ENCODE measurements at regions of chr10 and their contacts with region 1.

Region 1: DNA sequence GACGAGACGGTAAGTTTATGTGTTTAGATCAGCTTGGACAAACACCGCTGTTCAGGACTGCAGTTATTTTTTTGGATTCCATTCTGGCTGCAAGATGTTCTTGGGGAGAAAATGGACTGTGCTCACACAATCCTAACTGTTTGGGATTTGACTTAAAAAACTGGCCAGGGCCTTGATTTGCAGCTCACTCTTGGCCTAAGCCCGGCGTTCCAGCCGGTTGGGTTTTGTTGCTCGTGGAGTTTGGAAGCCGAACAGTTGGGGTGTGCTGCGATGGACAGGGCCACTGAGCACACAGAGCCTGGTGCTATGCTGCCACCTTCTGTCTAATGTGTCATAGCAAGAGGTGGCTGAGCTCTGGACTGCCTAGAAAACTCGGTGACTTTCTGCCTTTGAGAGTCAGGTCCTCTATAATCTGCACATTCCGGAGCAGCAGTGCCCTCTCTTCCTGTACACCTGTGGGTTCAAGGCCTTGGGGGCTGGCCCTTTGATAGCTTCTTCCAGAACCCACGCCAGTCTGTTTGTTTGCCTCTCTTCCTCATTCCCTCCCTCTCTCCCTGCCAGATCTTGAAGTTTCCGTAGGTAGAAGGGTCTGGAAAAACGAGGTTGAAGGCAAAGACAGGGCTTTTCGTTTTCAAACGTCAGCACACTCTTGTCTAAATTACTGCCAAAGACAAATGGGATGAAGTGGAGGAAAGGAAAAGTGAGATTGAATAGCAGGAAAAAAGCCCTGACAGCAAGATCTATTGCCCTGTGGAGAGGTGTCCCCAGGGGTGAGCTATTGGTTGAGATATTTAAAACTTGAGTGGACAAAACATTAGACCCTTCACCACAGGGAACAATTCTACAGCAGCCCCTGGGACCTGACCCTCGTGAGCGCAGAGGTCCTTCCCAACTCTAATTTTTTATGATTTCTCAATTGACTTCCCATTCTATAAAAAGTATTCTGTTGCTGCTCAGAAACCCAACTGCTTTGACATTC is 167.5 kb upstream of the HABP2 start:
- DNase-seq: peak; percentile 83 to 91 (median 87)
- ATAC-seq: peak; percentile 94 to 99 (median 98)
- H3K4me3 ChIP-seq: peak overlapping the region in 2 of 12 donors; percentile 1 to 16
- H3K27ac ChIP-seq: peak overlapping the region in 7 of 12 donors; percentile 2 to 66 (median 41)
- H3K4me1 ChIP-seq: peaks cover 0 to 33% (median 5%) of the 10 kb centered on the region in 12 donors
- H3K27me3 ChIP-seq: peaks cover 0 to 7% (median 0%) of the 10 kb centered on the region in 9 donors
- CTCF ChIP-seq: peak; percentile 81 to 92 (median 84)
- POLR2A ChIP-seq: no peak

Region 2: DNA sequence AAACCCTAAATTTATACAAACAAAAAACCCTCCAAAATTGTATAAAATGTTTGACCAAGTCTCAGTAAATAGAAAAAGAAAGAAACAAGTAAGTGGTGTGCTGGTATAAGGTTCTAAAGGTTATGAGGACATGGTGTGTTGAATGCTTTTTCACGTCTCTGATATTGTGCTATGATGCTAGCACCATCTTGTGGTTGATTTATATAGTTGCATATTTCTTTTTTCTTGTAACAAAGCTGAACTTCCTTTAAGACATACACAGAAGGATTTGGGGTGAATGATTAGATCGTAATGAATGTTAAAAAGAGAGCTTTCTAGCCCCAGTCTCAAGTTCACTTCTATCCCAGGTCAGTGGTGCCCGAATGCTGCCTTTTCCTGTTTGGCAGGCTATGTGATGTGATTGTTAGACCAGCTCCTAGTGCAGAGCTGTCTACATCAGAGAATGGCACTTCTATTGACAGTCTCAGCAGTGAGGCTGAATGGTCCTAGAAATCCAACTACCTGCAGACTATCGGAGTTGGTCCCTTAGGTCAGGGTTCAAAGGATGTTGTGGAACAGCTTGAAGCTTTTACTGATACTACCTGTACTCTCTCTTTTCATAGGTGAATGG is 913.3 kb before region 1 on chr10:
- intact Hi-C with region 1: loop called (anchors 2 to 10 kb)
- DNase-seq: no peak
- ATAC-seq: peak; percentile 17 to 63 (median 56)
- H3K4me3 ChIP-seq: no peak overlapping the region
- H3K27ac ChIP-seq: no peak overlapping the region
- H3K4me1 ChIP-seq: peaks cover 0 to 10% (median 0%) of the 10 kb centered on the region in 12 donors
- H3K27me3 ChIP-seq: no peaks in the 10 kb centered on the region
- CTCF ChIP-seq: peak; percentile 60 to 81 (median 70)
- POLR2A ChIP-seq: no peak

Region 3: DNA sequence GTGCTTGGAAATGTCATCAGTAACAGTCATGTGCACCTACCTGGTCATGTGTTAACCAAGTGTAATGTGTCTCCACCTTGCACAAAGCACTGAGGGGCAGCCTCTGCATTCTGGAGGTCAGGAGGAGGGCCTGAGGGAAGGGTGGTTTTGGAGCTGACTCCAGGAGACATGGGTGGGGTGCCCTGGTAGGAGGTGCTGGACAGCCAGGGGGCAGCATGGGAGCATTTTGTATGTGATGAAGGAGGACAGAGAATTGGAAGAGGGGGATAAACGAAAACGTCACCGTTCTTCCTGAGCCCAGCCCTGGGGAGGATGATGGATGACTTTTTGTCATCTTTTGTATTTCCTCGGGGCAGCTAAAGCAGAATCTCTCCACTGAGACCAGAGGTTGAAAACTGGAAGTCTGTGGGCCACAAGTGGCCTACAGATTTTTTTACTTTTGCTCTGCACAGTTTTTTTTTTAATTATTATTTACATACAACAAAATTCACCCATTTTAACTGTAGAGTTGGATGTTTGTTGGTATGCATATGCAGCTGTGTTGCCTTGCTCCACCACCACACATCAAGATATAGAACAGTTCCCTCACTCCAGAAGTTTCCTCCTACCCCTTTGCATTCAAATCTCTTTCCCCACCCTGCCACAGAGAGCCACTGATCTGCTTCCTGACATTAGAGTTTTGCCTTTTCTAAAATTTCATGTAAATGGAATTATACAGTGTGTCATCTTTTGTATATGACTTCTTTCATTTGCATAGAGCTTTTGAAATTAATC is 695.8 kb before region 1 on chr10:
- intact Hi-C with region 1: loop called in 2 of 10 experiments (anchors 5 to 10 kb)
- DNase-seq: peak in 3 of 5 donors; percentile 21 to 35 (median 27)
- ATAC-seq: peak in 1 of 4 donors; percentile 41
- H3K4me3 ChIP-seq: no peak overlapping the region
- H3K27ac ChIP-seq: no peak overlapping the region
- H3K4me1 ChIP-seq: no peaks in the 10 kb centered on the region
- H3K27me3 ChIP-seq: no peaks in the 10 kb centered on the region
- CTCF ChIP-seq: peak in 11 of 12 donors; percentile 15 to 52 (median 36)
- POLR2A ChIP-seq: no peak

Region 4: DNA sequence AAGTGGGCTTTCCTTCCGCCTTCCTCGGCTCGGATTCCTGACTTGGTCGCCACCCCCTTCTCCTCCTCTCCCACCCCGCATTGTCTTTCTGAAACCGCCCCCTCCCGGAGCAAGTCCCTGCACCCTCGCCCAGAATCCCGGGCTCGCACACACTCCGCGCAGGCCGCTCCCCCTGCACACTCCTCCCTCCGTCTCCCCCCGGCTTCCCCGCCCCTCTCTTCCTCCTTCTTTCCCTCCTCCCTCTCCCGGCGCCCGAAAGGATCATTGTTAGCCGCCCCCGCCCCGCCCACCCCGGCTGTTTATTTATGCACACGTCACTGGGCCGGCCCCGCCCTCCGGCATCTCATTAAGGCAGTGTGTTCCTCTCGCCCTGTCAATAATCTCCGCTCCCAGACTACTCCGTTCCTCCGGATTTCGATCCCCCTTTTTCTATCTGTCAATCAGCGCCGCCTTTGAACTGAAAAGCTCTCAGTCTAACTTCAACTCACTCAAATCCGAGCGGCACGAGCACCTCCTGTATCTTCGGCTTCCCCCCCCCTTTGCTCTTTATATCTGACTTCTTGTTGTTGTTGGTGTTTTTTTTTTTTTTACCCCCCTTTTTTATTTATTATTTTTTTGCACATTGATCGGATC is 435.3 kb before region 1 on chr10 and contains the start of gene TCF7L2:
- intact Hi-C with region 1: loop called in 1 of 10 experiments (anchors 10 kb)
- DNase-seq: peak; percentile 97 to 98 (median 97)
- ATAC-seq: peak; percentile 93 to 96 (median 95)
- H3K4me3 ChIP-seq: peak within 1 kb of the TSS; percentile 61 to 91 (median 73)
- H3K27ac ChIP-seq: peak within 1 kb of the TSS; percentile 82 to 97 (median 90)
- H3K4me1 ChIP-seq: peaks cover 0 to 39% (median 26%) of the 10 kb centered on the region in 12 donors
- H3K27me3 ChIP-seq: no peaks in the 10 kb centered on the region
- CTCF ChIP-seq: no peak
- POLR2A ChIP-seq: peak in 1 of 2 donors; percentile 75
- total RNA-seq, gene TCF7L2: 5.9 to 17.5 (median 11.1) TPM

Region 5: GRCh38 chr10:113139699-113140098 is 245.6 kb before region 1 on chr10:
- intact Hi-C with region 1: loop called in 3 of 10 experiments (anchors 10 kb)
- DNase-seq: no peak
- ATAC-seq: no peak
- H3K4me3 ChIP-seq: no peak overlapping the region
- H3K27ac ChIP-seq: peak overlapping the region in 1 of 12 donors; percentile 69
- H3K4me1 ChIP-seq: peaks cover 0 to 19% (median 5%) of the 10 kb centered on the region in 12 donors
- H3K27me3 ChIP-seq: no peaks in the 10 kb centered on the region
- CTCF ChIP-seq: peak in 5 of 12 donors; percentile 12 to 28 (median 23)
- POLR2A ChIP-seq: no peak